Activated CD4-positive, alpha-beta T cell treated with anti-CD3 and anti-CD28 coated beads for 36 hours (primary cell): ENCODE measurements at regions of chr19 and their contacts with region 1.

Region 1: GRCh38 chr19:13099073-13099999 is 3.3 kb downstream of the LYL1 start:
- DNase-seq: peak; percentile 89
- ATAC-seq: peak; percentile 61
- H3K4me3 Mint-ChIP-seq: peak overlapping the region; percentile 65
- H3K27ac Mint-ChIP-seq: peak overlapping the region; percentile 85
- H3K4me1 Mint-ChIP-seq: peaks cover 54% of the 10 kb centered on the region
- H3K27me3 Mint-ChIP-seq: peaks cover 32% of the 10 kb centered on the region

Region 2: GRCh38 chr19:12757544-12758274 is 341.6 kb before region 1 on chr19:
- CTCF ChIA-PET with region 1: no interaction called
- POLR2A ChIA-PET with region 1: no interaction called
- intact Hi-C with region 1: no loop called
- DNase-seq: peak; percentile 83
- ATAC-seq: peak; percentile 84
- H3K4me3 Mint-ChIP-seq: peak overlapping the region; percentile 19
- H3K27ac Mint-ChIP-seq: no peak overlapping the region
- H3K4me1 Mint-ChIP-seq: peaks cover 6% of the 10 kb centered on the region
- H3K27me3 Mint-ChIP-seq: peaks cover 20% of the 10 kb centered on the region

Region 3: GRCh38 chr19:12786141-12786870 is 313.0 kb before region 1 on chr19:
- CTCF ChIA-PET with region 1: no interaction called
- POLR2A ChIA-PET with region 1: no interaction called
- intact Hi-C with region 1: no loop called
- DNase-seq: peak; percentile 37
- ATAC-seq: no peak
- H3K4me3 Mint-ChIP-seq: no peak overlapping the region
- H3K27ac Mint-ChIP-seq: peak overlapping the region; percentile 81
- H3K4me1 Mint-ChIP-seq: peaks cover 27% of the 10 kb centered on the region
- H3K27me3 Mint-ChIP-seq: no peaks in the 10 kb centered on the region

Region 4: GRCh38 chr19:12838182-12838885 is 261.0 kb before region 1 on chr19 and contains the start of gene MAST1:
- CTCF ChIA-PET with region 1: no interaction called
- POLR2A ChIA-PET with region 1: no interaction called
- intact Hi-C with region 1: loop called in 1 of 2 experiments (anchors 2 kb)
- DNase-seq: peak; percentile 82
- ATAC-seq: peak; percentile 61
- H3K4me3 Mint-ChIP-seq: peak within 1 kb of the TSS; percentile 57
- H3K27ac Mint-ChIP-seq: no peak within 1 kb of the TSS
- H3K4me1 Mint-ChIP-seq: peaks cover 35% of the 10 kb centered on the region
- H3K27me3 Mint-ChIP-seq: peaks cover 70% of the 10 kb centered on the region
- total RNA-seq, gene MAST1: 1.8 to 2.7 TPM

Region 5: GRCh38 chr19:13012690-13013608 is 86.4 kb before region 1 on chr19:
- CTCF ChIA-PET with region 1: interaction called, 10 read pairs
- POLR2A ChIA-PET with region 1: no interaction called
- intact Hi-C with region 1: loop called in 1 of 2 experiments (anchors 1 kb)
- DNase-seq: peak; percentile 67
- ATAC-seq: peak; percentile 59
- H3K4me3 Mint-ChIP-seq: peak overlapping the region; percentile 72
- H3K27ac Mint-ChIP-seq: peak overlapping the region; percentile 79
- H3K4me1 Mint-ChIP-seq: peaks cover 22% of the 10 kb centered on the region
- H3K27me3 Mint-ChIP-seq: peaks cover 63% of the 10 kb centered on the region

Region 6: DNA sequence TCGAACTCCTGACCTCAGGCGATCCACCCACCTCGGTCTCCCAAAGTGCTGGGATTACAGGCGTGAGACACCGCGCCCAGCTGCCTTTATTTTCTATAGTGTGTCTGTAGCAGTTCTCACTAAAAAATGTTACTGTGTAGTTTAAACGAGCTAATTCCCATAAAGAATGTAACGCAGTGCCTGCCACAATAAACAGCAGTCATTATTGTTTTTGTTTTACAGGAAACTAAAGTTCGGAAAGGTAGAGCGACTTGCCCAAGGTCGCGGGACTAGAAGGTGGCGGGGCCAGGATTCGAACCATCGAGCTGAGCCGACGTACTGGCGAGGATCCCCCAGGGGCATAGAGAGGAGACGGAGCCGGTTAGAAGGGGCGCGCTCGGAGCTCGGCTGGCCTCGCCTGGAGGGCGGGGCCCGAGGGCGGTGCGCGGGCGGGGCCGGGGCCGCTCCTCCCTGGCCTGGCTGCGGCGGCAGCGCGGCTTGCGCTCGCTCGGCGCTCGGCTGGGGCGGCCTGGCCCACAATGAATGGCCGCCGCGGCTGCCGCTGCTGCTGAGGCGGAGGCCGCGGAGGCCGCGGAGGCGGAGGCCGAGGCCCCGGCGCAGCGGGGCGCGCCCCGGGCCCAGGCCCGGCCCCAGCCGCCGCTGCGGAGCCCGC is 18.6 kb after region 1 on chr19 and contains the start of gene NACC1:
- CTCF ChIA-PET with region 1: interaction called, 18 read pairs
- POLR2A ChIA-PET with region 1: no interaction called
- intact Hi-C with region 1: loop called (anchors 1 to 2 kb)
- DNase-seq: peak; percentile 95
- ATAC-seq: peak; percentile 85
- H3K4me3 Mint-ChIP-seq: peak within 1 kb of the TSS; percentile 87
- H3K27ac Mint-ChIP-seq: peak within 1 kb of the TSS; percentile 95
- H3K4me1 Mint-ChIP-seq: peaks cover 49% of the 10 kb centered on the region
- H3K27me3 Mint-ChIP-seq: no peaks in the 10 kb centered on the region
- total RNA-seq, gene NACC1: 77.5 to 84.5 TPM